ENCODE measurements at regions of chr2 and their contacts with region 1.

Region 1: GRCh38 chr2:48277153-48277552 is 252.8 kb upstream of the STON1 start:
- DNase-seq: no peak
- H3K4me3 Mint-ChIP-seq: no peak overlapping the region
- H3K27ac Mint-ChIP-seq: no peak overlapping the region
- H3K4me1 Mint-ChIP-seq: peaks cover 1% of the 10 kb centered on the region
- H3K27me3 Mint-ChIP-seq: no peaks in the 10 kb centered on the region

Region 2: DNA sequence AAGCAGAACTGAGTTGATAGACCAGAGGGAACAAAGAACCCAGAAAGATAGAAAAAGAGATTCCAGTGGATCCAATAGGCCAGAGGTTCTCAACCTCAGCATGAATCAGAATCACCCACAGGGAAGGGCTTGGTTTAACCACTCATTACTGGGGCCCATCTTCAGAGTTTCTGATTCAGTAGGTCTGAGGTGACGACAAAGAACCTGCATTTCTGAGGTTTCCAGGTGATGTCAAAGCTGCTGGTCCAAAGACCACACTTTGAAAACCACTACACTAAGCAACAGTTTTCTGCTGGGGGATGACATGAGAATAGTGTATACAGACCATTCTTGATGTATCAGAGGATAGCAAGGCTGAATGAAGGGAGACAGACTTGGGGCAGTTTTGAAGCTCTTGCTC is 44.1 kb before region 1 on chr2:
- CTCF ChIA-PET with region 1: no interaction called
- intact Hi-C with region 1: no loop called
- DNase-seq: no peak
- H3K4me3 Mint-ChIP-seq: no peak overlapping the region
- H3K27ac Mint-ChIP-seq: no peak overlapping the region
- H3K4me1 Mint-ChIP-seq: peaks cover 10% of the 10 kb centered on the region
- H3K27me3 Mint-ChIP-seq: no peaks in the 10 kb centered on the region

Region 3: DNA sequence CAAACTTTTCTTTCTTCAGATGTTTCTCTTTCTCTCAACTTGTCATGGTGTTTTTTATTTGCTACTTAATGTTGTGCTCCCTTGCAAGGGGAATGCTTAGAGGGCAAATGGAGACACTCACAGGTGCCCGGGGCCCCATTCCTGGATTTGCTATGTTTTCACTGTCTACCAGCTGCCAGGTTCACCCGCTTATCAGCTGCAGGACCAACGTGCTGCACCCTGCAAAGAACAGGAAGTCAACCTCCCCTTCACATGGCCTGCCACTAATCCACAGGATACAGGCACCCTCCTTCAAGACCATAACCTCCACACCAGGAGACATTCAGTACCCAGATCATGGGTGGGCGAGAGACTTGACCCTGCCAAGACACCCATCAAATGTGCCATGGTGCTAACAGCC is 15.2 kb after region 1 on chr2:
- CTCF ChIA-PET with region 1: no interaction called
- intact Hi-C with region 1: loop called (anchors 2 kb)
- DNase-seq: no peak
- H3K4me3 Mint-ChIP-seq: no peak overlapping the region
- H3K27ac Mint-ChIP-seq: no peak overlapping the region
- H3K4me1 Mint-ChIP-seq: peaks cover 6% of the 10 kb centered on the region
- H3K27me3 Mint-ChIP-seq: no peaks in the 10 kb centered on the region

Region 4: DNA sequence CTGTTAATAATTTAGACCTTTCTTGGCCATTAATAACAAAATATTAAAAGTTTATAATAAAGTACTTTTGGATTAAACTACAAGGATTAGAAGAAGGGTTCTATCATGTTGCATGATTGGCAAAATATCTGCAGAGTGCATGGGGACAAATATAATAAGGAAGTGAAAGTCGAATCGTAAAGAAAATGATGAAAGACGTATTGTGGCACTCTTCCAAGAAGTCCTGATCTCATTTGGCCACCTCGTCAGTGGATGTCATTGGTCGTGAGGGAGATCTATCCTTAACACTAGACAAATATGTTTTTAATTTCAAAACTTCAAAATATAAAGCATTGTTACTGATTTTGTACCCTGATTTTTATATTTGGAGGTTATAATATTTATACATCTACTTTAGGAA is 55.1 kb after region 1 on chr2:
- CTCF ChIA-PET with region 1: no interaction called
- intact Hi-C with region 1: no loop called
- DNase-seq: no peak
- H3K4me3 Mint-ChIP-seq: no peak overlapping the region
- H3K27ac Mint-ChIP-seq: no peak overlapping the region
- H3K4me1 Mint-ChIP-seq: peaks cover 40% of the 10 kb centered on the region
- H3K27me3 Mint-ChIP-seq: no peaks in the 10 kb centered on the region

Region 5: DNA sequence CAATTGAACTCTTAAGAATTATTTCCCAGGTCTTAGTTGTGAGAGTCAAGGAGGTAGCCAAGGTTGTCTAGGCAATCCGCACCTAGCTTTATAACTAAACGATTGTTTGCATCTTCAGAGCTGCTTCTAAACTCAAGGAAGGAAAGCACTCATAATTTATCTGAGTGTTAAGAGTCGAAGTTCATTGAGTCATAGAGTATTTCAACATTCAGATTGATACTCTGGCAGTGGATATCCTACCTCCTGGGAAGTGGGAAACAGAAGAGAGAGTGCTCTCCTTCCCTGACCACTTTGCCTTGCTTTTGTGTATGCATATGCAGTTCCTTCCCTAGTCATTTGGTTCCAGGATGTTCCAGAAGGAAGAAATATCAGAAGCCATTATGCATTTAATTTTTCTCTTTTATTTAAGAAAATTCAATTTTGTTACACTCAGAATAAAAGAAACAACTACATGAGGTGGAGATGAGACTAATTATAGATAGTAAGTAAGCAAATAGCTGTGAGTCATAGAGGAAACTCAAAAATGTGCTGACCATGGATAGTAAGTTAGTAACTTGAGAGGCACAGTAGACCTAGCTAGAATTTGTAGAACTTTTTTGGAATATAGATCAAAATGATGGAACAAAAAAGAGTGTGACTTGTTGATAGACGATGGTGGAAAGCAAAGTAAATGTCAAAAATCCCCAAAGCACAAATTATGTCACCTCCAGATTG is 912.5 kb after region 1 on chr2:
- CTCF ChIA-PET with region 1: no interaction called
- intact Hi-C with region 1: no loop called
- DNase-seq: no peak
- H3K4me3 Mint-ChIP-seq: no peak overlapping the region
- H3K27ac Mint-ChIP-seq: no peak overlapping the region
- H3K4me1 Mint-ChIP-seq: no peaks in the 10 kb centered on the region
- H3K27me3 Mint-ChIP-seq: no peaks in the 10 kb centered on the region